CD8-positive, alpha-beta T cell (primary cell): ENCODE measurements at regions of chr2 and their contacts with region 1.

Region 1: GRCh38 chr2:216108967-216109921 is at the start of gene XRCC5:
- DNase-seq: peak; percentile 93 to 99 (median 99)
- ATAC-seq: peak; percentile 84
- H3K4me3 ChIP-seq: peak within 1 kb of the TSS; percentile 96
- H3K4me3 Mint-ChIP-seq: peak within 1 kb of the TSS; percentile 100
- H3K27ac ChIP-seq: peak within 1 kb of the TSS; percentile 92 to 96
- H3K27ac Mint-ChIP-seq: peak within 1 kb of the TSS; percentile 100
- H3K4me1 ChIP-seq: peaks cover 46% of the 10 kb centered on the region
- H3K4me1 Mint-ChIP-seq: peaks cover 51% of the 10 kb centered on the region
- H3K27me3 ChIP-seq: no peaks in the 10 kb centered on the region
- H3K27me3 Mint-ChIP-seq: no peaks in the 10 kb centered on the region
- CTCF ChIP-seq: no peak
- total RNA-seq, gene XRCC5: 120 to 125 TPM

Region 2: GRCh38 chr2:215880970-215881369 is 228.3 kb before region 1 on chr2:
- CTCF ChIA-PET with region 1: no interaction called
- POLR2A ChIA-PET with region 1: no interaction called
- intact Hi-C with region 1: no loop called
- DNase-seq: no peak
- ATAC-seq: no peak
- H3K4me3 ChIP-seq: no peak overlapping the region
- H3K4me3 Mint-ChIP-seq: no peak overlapping the region
- H3K27ac ChIP-seq: no peak overlapping the region
- H3K27ac Mint-ChIP-seq: no peak overlapping the region
- H3K4me1 ChIP-seq: no peaks in the 10 kb centered on the region
- H3K4me1 Mint-ChIP-seq: no peaks in the 10 kb centered on the region
- H3K27me3 ChIP-seq: no peaks in the 10 kb centered on the region
- H3K27me3 Mint-ChIP-seq: peaks cover 6% of the 10 kb centered on the region
- CTCF ChIP-seq: no peak

Region 3: GRCh38 chr2:216081487-216082116 is 27.6 kb before region 1 on chr2 and contains the starts of genes PECR and TMEM169:
- CTCF ChIA-PET with region 1: interaction called, 9 read pairs
- POLR2A ChIA-PET with region 1: interaction called, 75 read pairs
- intact Hi-C with region 1: loop called (anchors 1 to 2 kb)
- DNase-seq: peak; percentile 36 to 83 (median 68)
- ATAC-seq: peak; percentile 81
- H3K4me3 ChIP-seq: peak within 1 kb of the TSS; percentile 90 to 91
- H3K4me3 Mint-ChIP-seq: peak within 1 kb of the TSS; percentile 95
- H3K27ac ChIP-seq: peak within 1 kb of the TSS; percentile 55 to 66
- H3K27ac Mint-ChIP-seq: peak within 1 kb of the TSS; percentile 93
- H3K4me1 ChIP-seq: peaks cover 66% of the 10 kb centered on the region
- H3K4me1 Mint-ChIP-seq: peaks cover 65% of the 10 kb centered on the region
- H3K27me3 ChIP-seq: no peaks in the 10 kb centered on the region
- H3K27me3 Mint-ChIP-seq: no peaks in the 10 kb centered on the region
- CTCF ChIP-seq: no peak
- total RNA-seq, gene PECR: 5.9 to 6.4 TPM
- total RNA-seq, gene TMEM169: not detected

Region 4: DNA sequence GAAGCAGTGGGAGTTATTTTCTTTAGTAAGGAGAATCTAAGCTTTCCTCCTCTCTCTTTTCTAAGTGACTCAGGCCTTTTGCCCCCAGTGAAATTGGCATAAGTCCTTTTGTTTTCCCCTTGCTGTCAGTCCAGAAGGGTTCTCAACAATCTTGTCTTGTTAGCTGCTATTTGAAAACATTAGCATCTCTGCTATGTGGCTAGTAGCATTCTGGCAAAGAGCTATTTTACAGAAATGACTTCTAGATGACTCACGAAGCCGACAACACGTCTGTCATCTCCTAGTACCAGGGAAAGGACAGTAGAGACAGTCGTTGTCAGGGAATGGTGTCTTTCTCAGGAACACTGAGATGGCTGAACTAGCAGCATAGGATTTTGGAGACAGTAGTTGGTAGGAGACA is 317.7 kb after region 1 on chr2:
- CTCF ChIA-PET with region 1: no interaction called
- POLR2A ChIA-PET with region 1: no interaction called
- intact Hi-C with region 1: no loop called
- DNase-seq: no peak
- ATAC-seq: no peak
- H3K4me3 ChIP-seq: no peak overlapping the region
- H3K4me3 Mint-ChIP-seq: no peak overlapping the region
- H3K27ac ChIP-seq: no peak overlapping the region
- H3K27ac Mint-ChIP-seq: no peak overlapping the region
- H3K4me1 ChIP-seq: no peaks in the 10 kb centered on the region
- H3K4me1 Mint-ChIP-seq: no peaks in the 10 kb centered on the region
- H3K27me3 ChIP-seq: no peaks in the 10 kb centered on the region
- H3K27me3 Mint-ChIP-seq: no peaks in the 10 kb centered on the region
- CTCF ChIP-seq: no peak